Heart right ventricle (tissue), 16 donors: ENCODE measurements at regions of chr20 and their contacts with region 1.

Region 1: GRCh38 chr20:49610701-49611538 is 43.0 kb upstream of the PTGIS start:
- DNase-seq: peak; percentile 63 to 81
- ATAC-seq: peak; percentile 61 to 85 (median 74)
- H3K4me3 ChIP-seq: peak overlapping the region in 4 of 10 donors; percentile 16 to 33 (median 26)
- H3K27ac ChIP-seq: peak overlapping the region in 4 of 10 donors; percentile 30 to 77 (median 52)
- H3K4me1 ChIP-seq: peaks cover 4 to 30% (median 22%) of the 10 kb centered on the region in 9 donors
- H3K27me3 ChIP-seq: peaks cover 0 to 16% (median 3%) of the 10 kb centered on the region in 7 donors
- CTCF ChIP-seq: peak; percentile 99 to 100 (median 100)

Region 2: GRCh38 chr20:49338061-49338460 is 272.9 kb before region 1 on chr20:
- intact Hi-C with region 1: loop called in 8 of 10 experiments (anchors 2 to 10 kb)
- DNase-seq: no peak
- ATAC-seq: no peak
- H3K4me3 ChIP-seq: no peak overlapping the region
- H3K27ac ChIP-seq: no peak overlapping the region
- H3K4me1 ChIP-seq: no peaks in the 10 kb centered on the region
- H3K27me3 ChIP-seq: peaks cover 0 to 12% (median 8%) of the 10 kb centered on the region in 7 donors
- CTCF ChIP-seq: no peak

Region 3: GRCh38 chr20:49713753-49714712 is 103.1 kb after region 1 on chr20 and contains the start of gene B4GALT5:
- intact Hi-C with region 1: loop called in 3 of 10 experiments (anchors 5 to 10 kb)
- DNase-seq: peak; percentile 72 to 76
- ATAC-seq: peak; percentile 82 to 93 (median 89)
- H3K4me3 ChIP-seq: peak within 1 kb of the TSS; percentile 79 to 99 (median 98)
- H3K27ac ChIP-seq: peak within 1 kb of the TSS; percentile 88 to 99 (median 96)
- H3K4me1 ChIP-seq: peaks cover 0 to 55% (median 42%) of the 10 kb centered on the region in 9 donors
- H3K27me3 ChIP-seq: no peaks in the 10 kb centered on the region
- CTCF ChIP-seq: no peak
- total RNA-seq, gene B4GALT5: 24.4 to 61.6 (median 34.3) TPM

Region 4: DNA sequence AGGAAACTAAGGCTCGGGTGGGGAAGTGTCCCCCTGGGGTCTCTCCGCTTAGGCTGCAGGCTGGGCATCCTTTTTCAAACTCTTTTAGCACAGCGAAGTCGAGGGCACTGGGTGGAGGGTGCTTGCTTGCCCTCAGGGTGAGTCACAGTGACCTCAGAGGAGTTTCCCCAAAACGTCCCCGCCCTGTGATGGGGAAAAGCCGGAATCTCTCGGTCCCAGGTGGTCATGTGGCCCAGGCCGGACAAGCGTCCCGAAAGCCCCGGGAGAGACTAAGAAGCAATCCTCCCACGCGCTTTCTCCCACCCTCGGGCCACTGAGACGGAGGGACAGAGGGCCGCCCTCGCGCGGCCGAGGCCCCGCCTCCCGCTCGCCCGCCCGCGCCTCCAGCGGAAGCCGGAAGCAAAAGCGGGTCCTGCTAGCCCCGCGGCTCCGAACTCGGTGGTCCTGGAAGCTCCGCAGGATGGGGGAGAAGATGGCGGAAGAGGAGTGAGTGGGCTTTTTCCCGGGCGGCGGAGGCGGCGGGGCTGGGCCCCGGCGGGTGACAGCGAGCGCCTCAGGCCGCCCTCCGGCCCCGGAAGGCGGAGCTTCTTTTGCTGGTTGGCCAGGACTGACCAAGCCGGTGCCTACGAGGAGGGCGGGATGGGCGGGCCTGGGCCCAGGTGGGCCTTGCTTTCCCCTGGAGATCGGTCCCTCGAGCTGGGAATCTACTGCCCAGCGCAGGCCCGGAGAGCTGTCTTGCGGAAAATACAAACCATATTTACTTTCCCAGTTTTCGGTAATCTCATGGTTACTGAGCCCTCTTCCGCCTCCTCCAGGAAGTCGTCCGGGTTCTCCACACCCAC is 201.8 kb after region 1 on chr20 and contains the start of gene SLC9A8:
- intact Hi-C with region 1: loop called in 5 of 10 experiments (anchors 2 to 10 kb)
- DNase-seq: peak; percentile 87 to 92
- ATAC-seq: peak; percentile 93 to 97 (median 96)
- H3K4me3 ChIP-seq: peak within 1 kb of the TSS; percentile 62 to 97 (median 86)
- H3K27ac ChIP-seq: peak within 1 kb of the TSS; percentile 67 to 98 (median 96)
- H3K4me1 ChIP-seq: peaks cover 0 to 36% (median 18%) of the 10 kb centered on the region in 9 donors
- H3K27me3 ChIP-seq: no peaks in the 10 kb centered on the region
- CTCF ChIP-seq: peak in 8 of 9 donors; percentile 32 to 63 (median 47)
- total RNA-seq, gene SLC9A8: 5.5 to 8.7 (median 6.9) TPM

Region 5: GRCh38 chr20:49853640-49854039 is 242.7 kb after region 1 on chr20:
- intact Hi-C with region 1: loop called in 3 of 10 experiments (anchors 5 kb)
- DNase-seq: no peak
- ATAC-seq: no peak
- H3K4me3 ChIP-seq: no peak overlapping the region
- H3K27ac ChIP-seq: no peak overlapping the region
- H3K4me1 ChIP-seq: peaks cover 2 to 40% (median 25%) of the 10 kb centered on the region in 9 donors
- H3K27me3 ChIP-seq: no peaks in the 10 kb centered on the region
- CTCF ChIP-seq: no peak

Region 6: GRCh38 chr20:49909499-49910339 is 298.8 kb after region 1 on chr20:
- intact Hi-C with region 1: loop called in 2 of 10 experiments (anchors 10 kb)
- DNase-seq: peak; percentile 29 to 40
- ATAC-seq: peak; percentile 47 to 89 (median 73)
- H3K4me3 ChIP-seq: peak overlapping the region in 1 of 10 donors; percentile 1
- H3K27ac ChIP-seq: peak overlapping the region; percentile 53 to 86 (median 82)
- H3K4me1 ChIP-seq: peaks cover 12 to 89% (median 62%) of the 10 kb centered on the region in 9 donors
- H3K27me3 ChIP-seq: no peaks in the 10 kb centered on the region
- CTCF ChIP-seq: peak; percentile 9 to 63 (median 49)

Region 7: GRCh38 chr20:49928401-49929141 is 317.7 kb after region 1 on chr20:
- intact Hi-C with region 1: loop called in 9 of 10 experiments (anchors 1 to 5 kb)
- DNase-seq: peak; percentile 72 to 77
- ATAC-seq: peak; percentile 76 to 89 (median 86)
- H3K4me3 ChIP-seq: no peak overlapping the region
- H3K27ac ChIP-seq: peak overlapping the region in 2 of 10 donors; percentile 6 to 48
- H3K4me1 ChIP-seq: peaks cover 0 to 19% (median 0%) of the 10 kb centered on the region in 9 donors
- H3K27me3 ChIP-seq: no peaks in the 10 kb centered on the region
- CTCF ChIP-seq: peak; percentile 87 to 95 (median 93)